ENCODE measurements at regions of chr5 and their contacts with region 1.

Region 1: DNA sequence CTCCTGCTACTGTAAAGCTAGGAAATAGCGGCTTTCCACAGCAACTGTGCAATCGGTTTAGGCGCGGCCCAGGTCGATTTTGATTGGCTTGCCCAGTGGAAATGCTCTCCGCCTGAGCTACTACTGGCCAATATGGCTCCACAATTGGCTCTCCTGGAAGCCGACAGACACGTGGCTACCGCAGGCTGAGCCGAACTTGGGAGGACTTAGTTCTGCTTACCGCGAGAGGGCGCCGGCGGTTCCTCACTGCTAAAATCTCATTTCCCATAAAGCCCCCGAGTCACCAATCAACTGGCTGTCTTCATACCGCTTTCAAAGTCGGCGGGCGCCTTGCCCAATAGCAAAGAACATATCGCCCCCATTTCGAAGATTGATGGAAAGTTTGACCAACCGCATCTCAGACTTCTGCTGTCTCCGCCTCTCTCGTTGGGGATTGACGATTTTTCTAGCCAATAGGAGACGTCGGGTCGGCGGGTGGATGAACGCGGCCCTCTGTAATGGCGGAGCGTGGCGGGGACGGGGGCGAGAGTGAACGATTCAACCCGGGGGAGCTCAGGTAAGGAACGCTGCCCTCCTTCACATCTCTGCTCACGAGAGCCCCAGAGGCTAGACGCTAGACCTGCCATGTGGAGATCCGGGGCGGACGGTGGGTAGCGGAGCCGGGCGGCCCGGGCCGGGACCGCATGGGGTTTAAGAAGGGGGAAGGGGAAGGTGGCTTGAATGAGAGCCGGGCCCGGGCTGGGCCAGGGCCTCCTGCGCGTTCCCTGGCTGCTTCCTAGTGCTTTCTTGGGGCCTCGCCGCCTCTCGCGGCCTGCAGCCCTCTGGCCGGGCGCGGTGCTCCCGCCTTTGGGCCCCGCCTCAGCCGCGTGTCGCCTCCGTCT is at the start of gene TCERG1:
- DNase-seq: peak; percentile 95 to 99
- ATAC-seq: peak; percentile 90 to 95 (median 93)
- H3K4me3 ChIP-seq: peak within 1 kb of the TSS; percentile 90
- H3K4me3 Mint-ChIP-seq: peak within 1 kb of the TSS; percentile 99
- H3K27ac ChIP-seq: peak within 1 kb of the TSS; percentile 92
- H3K27ac Mint-ChIP-seq: peak within 1 kb of the TSS; percentile 93 to 95
- H3K4me1 ChIP-seq: peaks cover 13% of the 10 kb centered on the region
- H3K4me1 Mint-ChIP-seq: peaks cover 31 to 34% of the 10 kb centered on the region in 2 donors
- H3K27me3 ChIP-seq: no peaks in the 10 kb centered on the region
- H3K27me3 Mint-ChIP-seq: peaks cover 0 to 2% of the 10 kb centered on the region in 2 donors
- CTCF ChIP-seq: peak; percentile 80
- total RNA-seq, gene TCERG1: 77.5 to 97.0 (median 96.1) TPM

Region 2: GRCh38 chr5:146185161-146185560 is 261.9 kb before region 1 on chr5:
- intact Hi-C with region 1: loop called (anchors 1 kb)
- DNase-seq: no peak
- ATAC-seq: no peak
- H3K4me3 ChIP-seq: no peak overlapping the region
- H3K4me3 Mint-ChIP-seq: peak overlapping the region; percentile 61
- H3K27ac ChIP-seq: no peak overlapping the region
- H3K27ac Mint-ChIP-seq: no peak overlapping the region
- H3K4me1 ChIP-seq: peaks cover 20% of the 10 kb centered on the region
- H3K4me1 Mint-ChIP-seq: peaks cover 8% of the 10 kb centered on the region in 2 donors
- H3K27me3 ChIP-seq: no peaks in the 10 kb centered on the region
- H3K27me3 Mint-ChIP-seq: peaks cover 9 to 11% of the 10 kb centered on the region in 2 donors
- CTCF ChIP-seq: no peak

Region 3: GRCh38 chr5:146466521-146467349 is 19.6 kb after region 1 on chr5:
- intact Hi-C with region 1: no loop called
- DNase-seq: no peak
- ATAC-seq: no peak
- H3K4me3 ChIP-seq: no peak overlapping the region
- H3K4me3 Mint-ChIP-seq: no peak overlapping the region
- H3K27ac ChIP-seq: no peak overlapping the region
- H3K27ac Mint-ChIP-seq: peak overlapping the region in 1 of 2 donors; percentile 25
- H3K4me1 ChIP-seq: no peaks in the 10 kb centered on the region
- H3K4me1 Mint-ChIP-seq: peaks cover 0 to 16% of the 10 kb centered on the region in 2 donors
- H3K27me3 ChIP-seq: no peaks in the 10 kb centered on the region
- H3K27me3 Mint-ChIP-seq: no peaks in the 10 kb centered on the region
- CTCF ChIP-seq: no peak

Region 4: DNA sequence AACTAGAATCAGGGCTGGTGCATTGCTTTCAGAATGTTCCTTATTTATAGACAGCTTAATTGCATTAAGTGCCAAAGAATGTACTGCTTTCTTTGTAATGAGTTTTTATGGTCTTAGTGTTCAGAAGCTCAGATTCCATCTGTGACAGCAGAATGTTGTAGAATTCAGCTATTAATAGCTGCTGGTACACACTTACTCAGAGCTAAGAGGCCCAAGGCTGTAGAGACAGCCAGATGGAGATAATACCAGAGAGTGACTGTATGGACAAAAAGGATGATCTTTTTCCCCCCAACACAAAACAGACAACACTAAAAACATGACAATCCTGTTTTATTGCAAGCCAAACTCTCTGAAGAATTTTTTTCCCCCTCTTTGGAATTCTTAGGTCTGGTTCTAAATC is 381.3 kb after region 1 on chr5:
- intact Hi-C with region 1: no loop called
- DNase-seq: no peak
- ATAC-seq: no peak
- H3K4me3 ChIP-seq: no peak overlapping the region
- H3K4me3 Mint-ChIP-seq: no peak overlapping the region
- H3K27ac ChIP-seq: no peak overlapping the region
- H3K27ac Mint-ChIP-seq: no peak overlapping the region
- H3K4me1 ChIP-seq: no peaks in the 10 kb centered on the region
- H3K4me1 Mint-ChIP-seq: peaks cover 26 to 35% of the 10 kb centered on the region in 2 donors
- H3K27me3 ChIP-seq: no peaks in the 10 kb centered on the region
- H3K27me3 Mint-ChIP-seq: no peaks in the 10 kb centered on the region
- CTCF ChIP-seq: no peak